Naive thymus-derived CD4-positive, alpha-beta T cell (primary cell): ENCODE measurements at regions of chr3 and their contacts with region 1.

Region 1: DNA sequence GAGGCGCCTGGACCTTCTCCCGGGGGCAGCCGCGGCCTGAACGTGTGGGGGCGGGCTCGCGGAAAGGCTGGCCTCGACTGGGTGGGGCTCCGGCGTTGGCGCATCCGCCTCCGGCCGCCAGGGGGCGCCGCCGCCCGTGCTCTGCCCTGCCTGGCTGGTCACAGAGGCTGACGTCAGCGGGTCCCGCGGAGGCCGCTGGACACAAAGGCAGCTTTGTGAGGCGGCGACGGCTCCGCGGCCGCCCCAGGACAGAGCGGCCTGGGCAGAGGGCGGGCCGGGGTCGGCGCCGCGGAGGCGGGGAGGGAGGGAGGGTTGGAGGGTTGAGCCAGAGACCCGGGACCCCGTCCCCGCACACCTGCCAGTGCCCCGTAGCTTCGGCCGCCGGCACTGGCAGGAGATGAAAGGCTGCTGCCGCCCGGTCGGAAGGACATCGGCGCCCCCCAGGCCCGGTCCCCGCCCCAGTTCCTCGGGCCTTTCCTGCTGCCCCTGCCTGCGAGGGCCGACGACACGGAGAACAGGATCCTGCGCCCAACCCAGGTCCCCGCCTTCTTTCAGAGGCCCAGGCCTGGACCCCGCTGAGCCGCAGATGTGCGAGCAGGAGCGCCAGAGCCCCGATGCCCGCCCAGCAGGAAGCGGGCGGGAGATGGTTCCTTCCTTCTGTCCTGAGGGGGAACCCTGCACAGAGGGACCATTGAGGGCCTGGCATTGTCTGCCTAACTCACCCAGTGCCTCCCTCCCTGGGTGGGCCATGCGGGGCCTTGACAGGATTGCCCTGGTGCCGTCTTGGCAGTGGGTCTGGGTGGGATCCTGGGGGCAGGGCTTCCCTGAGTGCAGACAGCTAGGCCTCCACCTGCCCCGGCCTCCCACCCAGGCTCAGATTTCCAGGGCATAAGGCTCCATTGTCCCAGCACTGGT is 8.7 kb upstream of the SEMA3B start:
- DNase-seq: peak; percentile 58 to 95 (median 78)
- ATAC-seq: peak; percentile 95
- H3K4me3 ChIP-seq: peak overlapping the region; percentile 43
- H3K4me3 Mint-ChIP-seq: peak overlapping the region; percentile 57 to 86 (median 68)
- H3K27ac ChIP-seq: peak overlapping the region; percentile 76
- H3K27ac Mint-ChIP-seq: peak overlapping the region in 8 of 9 donors; percentile 38 to 85 (median 77)
- H3K4me1 ChIP-seq: peaks cover 6% of the 10 kb centered on the region in 2 donors
- H3K4me1 Mint-ChIP-seq: peaks cover 0 to 12% (median 4%) of the 10 kb centered on the region in 7 donors
- H3K27me3 ChIP-seq: no peaks in the 10 kb centered on the region
- H3K27me3 Mint-ChIP-seq: no peaks in the 10 kb centered on the region

Region 2: DNA sequence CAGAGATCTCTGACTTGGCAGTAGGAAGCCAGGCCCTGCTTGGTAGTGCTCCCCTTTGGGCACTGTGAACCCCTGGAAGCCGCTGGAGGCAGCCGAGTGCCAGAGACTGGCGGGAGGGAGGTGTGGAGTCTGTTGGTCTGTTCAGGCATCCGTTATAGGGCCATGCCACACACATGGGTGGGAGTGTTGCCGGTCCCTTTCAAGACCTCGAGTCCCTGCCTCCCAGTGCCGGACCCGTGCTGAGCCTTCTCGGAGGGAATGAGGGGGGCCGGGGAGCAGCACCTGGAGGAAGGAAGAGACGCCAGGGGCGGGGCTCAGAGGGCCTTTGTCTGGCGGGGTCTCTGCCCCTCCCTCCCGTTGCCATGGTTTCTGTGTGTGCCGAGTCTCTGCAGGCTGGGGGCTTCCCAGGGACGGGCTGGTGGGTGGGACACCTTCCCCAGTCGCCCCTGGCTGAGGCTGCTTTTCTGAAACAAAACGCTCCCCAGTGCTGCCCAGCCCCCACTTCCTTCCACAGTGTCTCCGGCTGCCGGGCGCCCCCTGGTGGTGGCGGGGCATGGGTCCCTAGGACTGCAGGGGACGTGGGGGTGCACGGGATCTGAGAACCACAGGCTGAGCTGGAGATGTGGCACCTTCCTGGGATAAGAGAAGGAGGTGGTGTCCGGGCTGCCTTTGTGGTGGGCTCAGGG is 14.3 kb before region 1 on chr3:
- CTCF ChIA-PET with region 1: interaction called, 12 read pairs
- POLR2A ChIA-PET with region 1: interaction called, 7 read pairs
- intact Hi-C with region 1: loop called (anchors 1 kb)
- DNase-seq: peak; percentile 88 to 99 (median 94)
- ATAC-seq: peak; percentile 90
- H3K4me3 ChIP-seq: peak overlapping the region; percentile 52
- H3K4me3 Mint-ChIP-seq: peak overlapping the region; percentile 77 to 89 (median 82)
- H3K27ac ChIP-seq: peak overlapping the region; percentile 88
- H3K27ac Mint-ChIP-seq: peak overlapping the region; percentile 80 to 96 (median 95)
- H3K4me1 ChIP-seq: peaks cover 61 to 87% of the 10 kb centered on the region in 2 donors
- H3K4me1 Mint-ChIP-seq: peaks cover 57 to 90% (median 74%) of the 10 kb centered on the region in 7 donors
- H3K27me3 ChIP-seq: no peaks in the 10 kb centered on the region
- H3K27me3 Mint-ChIP-seq: no peaks in the 10 kb centered on the region

Region 3: DNA sequence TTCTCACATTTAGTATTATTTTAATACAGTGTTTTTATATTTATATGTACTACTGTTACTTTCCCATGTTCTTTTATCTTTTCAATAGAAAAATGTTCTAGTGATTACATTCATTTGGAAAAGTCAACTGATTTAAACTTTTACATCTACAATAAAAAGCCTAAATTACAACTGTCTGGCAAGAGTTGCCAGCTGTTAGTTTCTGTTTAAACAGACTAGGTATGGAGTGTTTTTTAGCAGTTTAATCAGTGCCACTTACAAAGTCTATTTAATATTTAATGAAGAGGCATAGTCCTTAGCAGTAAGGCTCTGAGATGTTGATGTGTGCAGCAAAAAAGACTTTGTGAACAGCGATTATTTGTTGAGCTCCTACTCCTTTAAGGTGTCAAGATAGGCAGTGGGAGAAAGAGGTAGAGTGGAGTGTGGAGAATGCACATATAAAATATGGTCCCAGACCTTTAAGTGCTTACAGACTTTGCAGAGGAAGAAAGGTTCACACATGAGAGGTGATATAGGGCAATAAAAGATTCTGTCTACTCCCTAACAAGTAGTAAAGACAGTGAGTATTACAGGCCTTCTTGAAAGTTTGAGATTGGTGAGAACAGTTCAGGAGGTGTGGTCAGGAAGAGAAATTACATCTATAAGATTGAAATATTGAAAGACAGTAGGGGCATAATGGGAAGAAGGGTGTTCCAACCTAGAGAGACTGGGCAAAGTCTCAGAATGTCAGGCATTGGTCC is 735.0 kb after region 1 on chr3:
- CTCF ChIA-PET with region 1: no interaction called
- POLR2A ChIA-PET with region 1: no interaction called
- intact Hi-C with region 1: no loop called
- DNase-seq: no peak
- ATAC-seq: no peak
- H3K4me3 ChIP-seq: no peak overlapping the region
- H3K4me3 Mint-ChIP-seq: no peak overlapping the region
- H3K27ac ChIP-seq: no peak overlapping the region
- H3K27ac Mint-ChIP-seq: no peak overlapping the region
- H3K4me1 ChIP-seq: no peaks in the 10 kb centered on the region
- H3K4me1 Mint-ChIP-seq: peaks cover 0 to 4% (median 0%) of the 10 kb centered on the region in 7 donors
- H3K27me3 ChIP-seq: no peaks in the 10 kb centered on the region
- H3K27me3 Mint-ChIP-seq: peaks cover 0 to 3% (median 0%) of the 10 kb centered on the region in 5 donors